ENCODE measurements at regions of chr6 and their contacts with region 1.

Region 1: DNA sequence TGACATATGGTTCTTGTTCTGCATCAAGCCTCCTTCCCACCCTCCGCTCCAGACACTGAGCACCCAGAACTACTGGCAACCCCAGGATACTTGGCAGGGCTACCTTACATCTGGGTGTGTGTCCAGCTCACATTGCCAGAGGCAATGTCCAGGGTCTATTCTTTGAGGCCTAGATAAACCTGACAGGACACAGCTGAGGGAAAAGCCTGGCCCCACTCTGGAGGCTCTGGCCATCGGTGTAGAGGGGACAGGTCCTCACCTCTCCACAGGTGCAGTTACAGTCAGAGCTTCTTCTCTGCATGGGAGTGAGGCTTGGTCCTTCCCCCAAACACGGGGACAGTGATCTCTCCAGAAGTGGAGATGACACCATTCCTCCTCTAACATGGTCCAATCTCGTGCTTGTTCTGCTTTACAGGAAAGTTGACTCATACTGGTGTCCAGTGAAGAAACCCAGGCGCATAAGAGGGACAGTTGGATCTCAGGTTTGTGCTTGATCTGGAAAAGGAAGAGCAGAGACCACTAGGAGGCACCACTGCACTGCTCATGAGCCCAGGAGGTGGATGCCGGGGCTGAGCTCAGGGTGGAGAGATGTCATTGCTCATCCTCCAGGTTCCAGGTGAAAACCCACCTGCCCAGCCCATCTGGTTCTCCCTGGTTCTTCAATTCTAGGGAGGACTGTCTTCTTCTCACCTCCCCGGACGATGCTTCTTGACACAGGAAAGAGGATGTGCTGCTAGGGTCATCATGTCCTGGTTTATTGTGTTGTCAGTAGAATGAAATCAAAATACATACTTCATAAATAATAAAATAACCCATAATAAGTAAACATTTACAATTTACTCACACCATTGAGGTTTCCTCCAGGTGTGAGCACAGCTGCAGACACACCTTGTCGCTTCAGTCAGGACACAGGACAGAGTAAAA is 14.7 kb downstream of the HLA-F start:
- DNase-seq: peak; percentile 84
- H3K4me3 ChIP-seq: no peak overlapping the region
- H3K27ac ChIP-seq: no peak overlapping the region
- H3K4me1 ChIP-seq: no peaks in the 10 kb centered on the region
- H3K27me3 ChIP-seq: no peaks in the 10 kb centered on the region
- CTCF ChIP-seq: peak; percentile 49

Region 2: GRCh38 chr6:29705389-29706231 is 32.4 kb before region 1 on chr6:
- intact Hi-C with region 1: no loop called
- DNase-seq: peak; percentile 49
- H3K4me3 ChIP-seq: no peak overlapping the region
- H3K27ac ChIP-seq: no peak overlapping the region
- H3K4me1 ChIP-seq: no peaks in the 10 kb centered on the region
- H3K27me3 ChIP-seq: no peaks in the 10 kb centered on the region
- CTCF ChIP-seq: peak; percentile 53

Region 3: DNA sequence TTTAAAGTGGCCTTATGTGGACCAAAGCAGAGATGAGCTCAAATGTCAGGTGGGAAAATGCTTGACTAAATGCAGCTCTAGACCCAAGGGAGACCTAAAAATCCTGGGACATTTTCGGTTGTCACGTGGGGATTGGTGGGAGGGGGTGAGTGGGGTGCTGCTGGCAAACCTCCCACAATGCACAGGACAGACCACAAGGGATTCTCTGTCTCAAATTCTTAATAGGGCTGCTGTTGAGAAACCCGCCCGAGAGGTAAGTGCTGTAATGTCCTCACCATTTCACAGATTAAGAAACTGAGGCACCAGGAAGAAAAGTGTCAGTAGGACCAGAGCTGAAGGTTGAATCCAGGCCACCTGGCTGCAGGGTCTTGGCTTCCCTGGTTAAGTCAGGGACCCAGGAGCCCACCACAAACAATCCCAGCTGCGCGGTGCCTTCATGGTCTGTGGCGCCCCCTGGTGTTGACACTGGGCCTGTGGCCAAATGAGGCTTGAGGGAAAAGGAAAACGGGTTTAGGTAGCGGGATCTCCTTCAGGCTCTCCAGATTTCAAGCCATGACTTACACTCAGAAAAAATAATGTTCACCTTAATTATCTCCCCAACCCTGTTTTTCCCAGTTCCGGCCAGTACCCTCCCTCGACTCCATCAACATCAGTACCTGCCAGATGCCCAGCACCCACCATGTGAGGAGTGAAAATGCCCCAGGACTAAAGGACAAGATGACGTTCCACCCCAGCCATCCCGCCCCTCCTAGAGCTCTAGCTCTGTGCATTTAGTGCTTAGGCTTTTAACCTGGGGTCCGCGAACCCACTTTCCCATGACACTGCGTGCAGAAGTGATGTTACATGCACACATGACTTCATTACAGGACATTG is 96.8 kb after region 1 on chr6:
- intact Hi-C with region 1: loop called (anchors 2 kb)
- DNase-seq: peak; percentile 56
- H3K4me3 ChIP-seq: no peak overlapping the region
- H3K27ac ChIP-seq: no peak overlapping the region
- H3K4me1 ChIP-seq: no peaks in the 10 kb centered on the region
- H3K27me3 ChIP-seq: no peaks in the 10 kb centered on the region
- CTCF ChIP-seq: peak; percentile 84

Measured in colonic mucosa (tissue), 4 donors.